Ascending aorta (tissue), 2 donors: ENCODE measurements at regions of chr2 and their contacts with region 1.

Region 1: GRCh38 chr2:44361330-44362206 is at the starts of genes CAMKMT and PREPL:
- DNase-seq: peak; percentile 95 to 99
- H3K4me3 ChIP-seq: peak within 1 kb of the TSS; percentile 88 to 98
- H3K27ac ChIP-seq: peak within 1 kb of the TSS; percentile 88 to 99
- H3K4me1 ChIP-seq: peaks cover 4 to 27% of the 10 kb centered on the region in 2 donors
- H3K27me3 ChIP-seq: no peaks in the 10 kb centered on the region
- CTCF ChIP-seq: no peak
- total RNA-seq, gene CAMKMT: 5.1 TPM
- total RNA-seq, gene PREPL: 22.6 TPM

Region 2: GRCh38 chr2:44087036-44087713 is 274.4 kb before region 1 on chr2:
- intact Hi-C with region 1: loop called (anchors 10 kb)
- DNase-seq: peak; percentile 49 to 92
- H3K4me3 ChIP-seq: peak overlapping the region; percentile 18 to 60
- H3K27ac ChIP-seq: peak overlapping the region; percentile 66 to 70
- H3K4me1 ChIP-seq: peaks cover 0 to 11% of the 10 kb centered on the region in 2 donors
- H3K27me3 ChIP-seq: no peaks in the 10 kb centered on the region
- CTCF ChIP-seq: peak; percentile 90 to 97 (median 96)

Region 3: GRCh38 chr2:44244129-44244871 is 117.3 kb before region 1 on chr2:
- intact Hi-C with region 1: loop called (anchors 5 kb)
- DNase-seq: peak in 1 of 2 donors; percentile 78
- H3K4me3 ChIP-seq: peak overlapping the region; percentile 48 to 60
- H3K27ac ChIP-seq: no peak overlapping the region
- H3K4me1 ChIP-seq: peaks cover 0 to 3% of the 10 kb centered on the region in 2 donors
- H3K27me3 ChIP-seq: no peaks in the 10 kb centered on the region
- CTCF ChIP-seq: peak; percentile 23 to 77 (median 56)

Region 4: DNA sequence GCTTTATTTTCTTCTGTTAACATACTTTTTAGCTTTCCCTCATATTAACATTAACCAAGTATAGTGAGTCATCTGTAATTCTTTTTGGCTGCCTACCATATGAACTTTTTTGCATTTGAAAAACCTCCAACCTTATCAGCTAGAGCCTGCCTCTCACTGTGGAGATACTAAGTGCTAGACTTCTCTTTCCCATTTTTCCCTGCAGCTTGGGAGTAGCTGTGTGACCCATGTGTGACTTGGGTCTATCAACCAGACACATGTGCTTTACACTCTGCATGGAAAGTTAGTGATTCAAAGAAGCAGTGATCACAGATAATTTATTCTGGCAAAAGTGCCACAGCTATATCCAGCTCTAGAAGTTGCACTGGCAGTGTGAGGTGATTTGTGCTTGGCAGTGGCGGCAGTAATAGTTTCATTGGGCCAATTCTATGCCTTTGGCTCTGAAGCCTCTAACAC is 36.6 kb before region 1 on chr2:
- intact Hi-C with region 1: loop called (anchors 5 kb)
- DNase-seq: peak in 1 of 2 donors; percentile 63
- H3K4me3 ChIP-seq: no peak overlapping the region
- H3K27ac ChIP-seq: peak overlapping the region; percentile 29 to 62
- H3K4me1 ChIP-seq: peaks cover 0 to 31% of the 10 kb centered on the region in 2 donors
- H3K27me3 ChIP-seq: no peaks in the 10 kb centered on the region
- CTCF ChIP-seq: no peak